Gastrocnemius medialis (tissue), 4 donors: ENCODE measurements at regions of chr3 and their contacts with region 1.

Region 1: GRCh38 chr3:113745273-113746068 is 578 bp downstream of the NAA50 start:
- DNase-seq: peak; percentile 81 to 86
- ATAC-seq: peak; percentile 69 to 81
- H3K4me3 ChIP-seq: peak overlapping the region; percentile 87 to 97 (median 92)
- H3K27ac ChIP-seq: peak overlapping the region; percentile 97 to 100 (median 98)
- H3K4me1 ChIP-seq: peaks cover 62 to 67% of the 10 kb centered on the region in 2 donors
- H3K27me3 ChIP-seq: no peaks in the 10 kb centered on the region
- CTCF ChIP-seq: peak; percentile 49 to 64 (median 57)
- POLR2A ChIP-seq: peak in 1 of 2 donors; percentile 39

Region 2: DNA sequence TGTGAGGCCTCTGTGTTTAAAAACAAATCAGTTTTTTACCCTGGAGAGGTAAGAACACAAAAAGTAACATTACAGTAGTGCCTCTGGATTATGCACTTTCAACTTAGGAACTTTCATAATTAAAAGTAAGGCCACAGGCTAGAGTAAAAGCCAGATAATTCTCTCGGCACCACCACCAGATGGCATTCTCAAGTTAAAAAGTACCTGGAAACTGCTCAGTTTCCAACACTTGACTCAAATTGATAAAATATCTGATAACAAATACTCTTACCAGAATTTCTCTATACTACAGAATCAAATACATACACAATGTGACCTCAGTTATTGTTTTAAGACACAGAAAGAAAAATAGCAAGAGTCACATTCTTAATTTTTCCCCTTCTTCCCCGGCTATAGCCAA is 250.4 kb before region 1 on chr3:
- in situ Hi-C with region 1: loop called in 3 of 4 experiments (anchors 10 to 25 kb)
- intact Hi-C with region 1: loop called (anchors 1 kb)
- DNase-seq: peak in 1 of 2 donors; percentile 21
- ATAC-seq: peak; percentile 55 to 60
- H3K4me3 ChIP-seq: no peak overlapping the region
- H3K27ac ChIP-seq: peak overlapping the region in 1 of 4 donors; percentile 11
- H3K4me1 ChIP-seq: no peaks in the 10 kb centered on the region
- H3K27me3 ChIP-seq: no peaks in the 10 kb centered on the region
- CTCF ChIP-seq: peak in 4 of 5 experiments; percentile 4 to 52 (median 42)
- POLR2A ChIP-seq: no peak

Region 3: DNA sequence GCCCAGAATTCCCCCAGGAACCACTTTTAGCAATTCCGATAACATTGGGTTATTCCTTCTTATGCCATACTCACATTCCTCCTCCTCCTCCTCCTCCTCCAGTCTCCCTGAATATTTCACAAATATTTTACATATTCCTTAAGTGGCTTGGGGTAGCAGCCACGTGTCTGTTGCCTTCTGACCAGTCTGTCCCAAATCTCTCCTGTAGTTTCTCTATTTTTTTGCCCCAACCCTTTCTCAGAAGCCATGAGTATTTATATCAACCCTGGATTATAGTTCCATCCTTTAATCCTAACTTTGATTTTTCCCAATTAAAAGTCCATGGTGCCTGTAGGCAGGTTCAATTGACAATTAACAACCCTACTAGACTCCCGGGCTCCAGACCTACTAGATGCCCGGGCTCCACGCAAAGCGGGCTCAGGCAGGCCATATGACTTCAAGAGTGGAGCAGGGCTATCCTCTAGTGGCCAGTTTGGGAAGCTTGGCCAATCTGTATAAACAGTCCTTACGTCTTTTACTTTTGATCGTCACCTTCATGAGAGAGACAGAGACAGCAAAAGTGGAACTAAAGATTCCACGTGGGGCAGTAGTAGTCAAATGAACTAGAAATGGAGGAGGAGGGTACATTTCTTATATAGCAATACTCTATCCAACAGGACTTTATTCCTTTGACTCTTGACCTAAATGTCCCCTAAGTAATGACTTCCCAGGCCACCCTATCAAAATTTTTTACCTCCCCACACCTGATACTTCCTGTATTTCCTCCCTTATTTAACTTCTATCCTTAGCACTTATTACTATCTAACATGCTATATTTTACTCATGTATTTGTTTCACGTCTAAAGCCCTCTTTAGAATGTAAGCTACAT is 118.7 kb before region 1 on chr3:
- in situ Hi-C with region 1: no loop called
- intact Hi-C with region 1: loop called (anchors 2 kb)
- DNase-seq: peak; percentile 38 to 64
- ATAC-seq: peak; percentile 72 to 76
- H3K4me3 ChIP-seq: peak overlapping the region in 3 of 4 donors; percentile 2 to 16 (median 9)
- H3K27ac ChIP-seq: peak overlapping the region; percentile 59 to 65 (median 61)
- H3K4me1 ChIP-seq: peaks cover 34 to 51% of the 10 kb centered on the region in 2 donors
- H3K27me3 ChIP-seq: no peaks in the 10 kb centered on the region
- CTCF ChIP-seq: peak; percentile 79 to 97 (median 89)
- POLR2A ChIP-seq: no peak

Region 4: DNA sequence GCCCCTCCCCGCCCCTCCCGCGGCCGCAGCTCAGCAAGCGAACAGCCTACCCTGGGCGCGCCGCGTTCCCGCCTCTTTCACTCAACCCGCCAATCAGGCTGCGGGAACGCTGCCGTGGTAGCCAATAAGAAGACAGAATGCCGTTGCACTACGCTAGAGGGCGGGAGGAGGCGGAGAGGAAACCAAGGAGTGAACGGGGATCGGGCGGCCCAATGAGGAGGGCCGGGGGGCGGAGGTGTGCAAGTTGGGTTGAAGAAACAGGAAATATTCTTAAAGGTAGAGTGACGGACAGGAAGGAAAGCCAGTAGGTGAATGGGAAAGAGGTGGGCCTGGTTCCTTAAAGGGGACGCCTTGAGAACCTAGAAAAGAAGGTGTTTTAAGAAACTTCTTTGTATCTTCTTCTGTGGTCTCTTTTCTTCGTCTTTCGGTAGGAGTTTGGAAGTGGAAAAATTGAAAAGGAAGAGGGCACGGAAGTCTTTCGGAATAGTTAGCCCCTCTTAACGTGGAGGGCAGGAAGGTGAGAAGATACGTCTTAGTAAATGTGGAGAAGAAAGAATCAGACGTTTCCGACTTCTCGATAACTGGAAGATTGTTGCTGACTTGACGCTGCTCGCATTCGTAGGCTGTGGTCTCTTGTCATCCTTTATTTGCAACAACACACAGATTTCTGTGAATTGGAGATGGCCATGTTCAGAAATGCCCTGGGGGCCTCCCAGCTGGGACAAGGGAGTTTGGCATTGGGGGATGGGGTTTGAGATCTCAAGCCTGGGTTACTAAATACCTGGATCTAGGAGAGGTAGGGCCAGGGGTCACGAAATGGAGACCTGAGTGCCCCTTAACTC is 48.6 kb before region 1 on chr3:
- in situ Hi-C with region 1: loop called in 1 of 4 experiments (anchors 5 kb)
- intact Hi-C with region 1: loop called (anchors 1 kb)
- DNase-seq: peak; percentile 100
- ATAC-seq: peak; percentile 91 to 92
- H3K4me3 ChIP-seq: peak overlapping the region; percentile 76 to 91 (median 78)
- H3K27ac ChIP-seq: peak overlapping the region; percentile 95 to 99 (median 96)
- H3K4me1 ChIP-seq: peaks cover 48 to 51% of the 10 kb centered on the region in 2 donors
- H3K27me3 ChIP-seq: no peaks in the 10 kb centered on the region
- CTCF ChIP-seq: peak in 2 of 5 experiments; percentile 5 to 24
- POLR2A ChIP-seq: no peak

Region 5: GRCh38 chr3:113947372-113948014 is 202.0 kb after region 1 on chr3 and contains the start of gene ZDHHC23:
- in situ Hi-C with region 1: no loop called
- intact Hi-C with region 1: loop called (anchors 5 kb)
- DNase-seq: peak; percentile 67 to 78
- ATAC-seq: peak; percentile 84 to 91
- H3K4me3 ChIP-seq: peak within 1 kb of the TSS; percentile 77 to 86 (median 80)
- H3K27ac ChIP-seq: peak within 1 kb of the TSS; percentile 68 to 80 (median 72)
- H3K4me1 ChIP-seq: peaks cover 0 to 2% of the 10 kb centered on the region in 2 donors
- H3K27me3 ChIP-seq: no peaks in the 10 kb centered on the region
- CTCF ChIP-seq: no peak
- POLR2A ChIP-seq: peak in 1 of 2 donors; percentile 24
- total RNA-seq, gene ZDHHC23: 0.92 to 3.5 (median 2.3) TPM

Region 6: DNA sequence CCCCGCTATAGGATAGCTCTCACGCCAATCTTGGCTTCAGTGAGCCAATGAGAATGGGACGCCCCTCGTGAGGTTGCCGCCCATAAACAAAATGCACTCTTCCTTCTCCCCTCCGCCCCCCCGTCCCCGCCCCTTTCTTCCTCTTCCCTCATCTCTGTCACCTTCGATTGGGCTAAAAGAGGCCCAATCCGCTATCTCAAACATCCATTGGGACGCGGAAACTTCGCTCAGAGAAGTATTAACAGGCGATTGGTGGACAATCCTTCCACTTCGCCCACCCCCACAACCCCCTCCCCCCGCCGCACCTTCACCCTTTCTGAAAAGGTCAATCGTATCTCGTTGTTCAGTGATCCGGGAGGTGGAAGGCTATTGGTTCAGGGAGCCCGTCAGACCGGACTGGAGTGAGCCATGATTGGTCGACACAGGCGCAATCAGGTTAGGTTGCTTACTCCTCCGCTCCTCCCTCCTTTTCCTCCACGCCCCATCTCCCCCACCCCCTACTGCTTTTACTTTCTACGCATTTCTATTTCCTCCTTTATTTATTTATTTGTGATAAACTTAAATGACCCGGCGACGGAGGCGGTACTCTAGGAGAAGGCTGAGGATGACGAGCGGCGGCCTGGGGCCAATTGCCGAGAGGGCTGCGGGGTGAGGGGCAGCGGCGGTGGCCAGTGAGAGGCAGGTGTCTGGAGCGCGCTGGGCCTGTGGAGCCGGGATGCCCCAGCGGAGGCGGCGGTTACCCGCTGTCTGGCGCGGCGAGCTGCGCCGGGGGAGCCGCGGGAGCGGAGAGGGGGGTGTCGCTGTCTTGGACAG is 1402.1 kb after region 1 on chr3:
- in situ Hi-C with region 1: no loop called
- intact Hi-C with region 1: loop called (anchors 5 kb)
- DNase-seq: peak; percentile 99 to 100
- ATAC-seq: peak; percentile 83 to 86
- H3K4me3 ChIP-seq: peak overlapping the region; percentile 84 to 94 (median 88)
- H3K27ac ChIP-seq: peak overlapping the region; percentile 96 to 100 (median 98)
- H3K4me1 ChIP-seq: peaks cover 26 to 41% of the 10 kb centered on the region in 2 donors
- H3K27me3 ChIP-seq: no peaks in the 10 kb centered on the region
- CTCF ChIP-seq: peak in 1 of 5 experiments; percentile 21
- POLR2A ChIP-seq: peak; percentile 70 to 86